Caco-2 (cell line): ENCODE measurements at regions of chrX and their contacts with region 1.

Region 1: DNA sequence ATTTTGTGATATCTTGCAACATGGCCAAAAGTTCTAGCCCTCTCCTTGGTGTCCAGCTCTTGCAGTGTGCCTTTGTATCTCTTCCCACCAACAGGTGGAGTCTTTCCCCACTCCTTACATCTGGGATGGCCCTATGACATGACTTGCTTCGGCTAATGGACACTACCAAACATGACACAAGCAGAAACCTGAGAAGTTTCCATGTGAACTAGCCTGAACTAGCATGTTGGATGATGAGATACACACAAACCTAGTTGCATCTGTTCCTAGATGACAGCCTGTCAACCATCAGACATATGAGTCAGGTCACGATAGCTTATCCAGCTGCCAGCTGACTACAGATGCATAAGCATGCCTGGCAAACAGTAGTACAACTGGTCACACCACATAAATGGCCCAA is 207.5 kb upstream of the FTHL17 start:
- DNase-seq: peak; percentile 20 to 32
- H3K4me3 ChIP-seq: no peak overlapping the region
- H3K4me3 Mint-ChIP-seq: no peak overlapping the region
- H3K27ac Mint-ChIP-seq: no peak overlapping the region
- H3K4me1 ChIP-seq: no peaks in the 10 kb centered on the region
- H3K4me1 Mint-ChIP-seq: peaks cover 8% of the 10 kb centered on the region
- H3K27me3 ChIP-seq: no peaks in the 10 kb centered on the region
- H3K27me3 Mint-ChIP-seq: no peaks in the 10 kb centered on the region
- CTCF ChIP-seq: peak; percentile 24 to 31

Region 2: GRCh38 chrX:30715976-30716375 is 563.4 kb before region 1 on chrX:
- CTCF ChIA-PET with region 1: no interaction called
- POLR2A ChIA-PET with region 1: no interaction called
- intact Hi-C with region 1: no loop called
- DNase-seq: no peak
- H3K4me3 ChIP-seq: no peak overlapping the region
- H3K4me3 Mint-ChIP-seq: no peak overlapping the region
- H3K27ac Mint-ChIP-seq: no peak overlapping the region
- H3K4me1 ChIP-seq: no peaks in the 10 kb centered on the region
- H3K4me1 Mint-ChIP-seq: no peaks in the 10 kb centered on the region
- H3K27me3 ChIP-seq: no peaks in the 10 kb centered on the region
- H3K27me3 Mint-ChIP-seq: no peaks in the 10 kb centered on the region
- CTCF ChIP-seq: no peak

Region 3: GRCh38 chrX:31092970-31093638 is 186.3 kb before region 1 on chrX:
- CTCF ChIA-PET with region 1: no interaction called
- POLR2A ChIA-PET with region 1: no interaction called
- intact Hi-C with region 1: no loop called
- DNase-seq: no peak
- H3K4me3 ChIP-seq: no peak overlapping the region
- H3K4me3 Mint-ChIP-seq: no peak overlapping the region
- H3K27ac Mint-ChIP-seq: no peak overlapping the region
- H3K4me1 ChIP-seq: no peaks in the 10 kb centered on the region
- H3K4me1 Mint-ChIP-seq: no peaks in the 10 kb centered on the region
- H3K27me3 ChIP-seq: no peaks in the 10 kb centered on the region
- H3K27me3 Mint-ChIP-seq: no peaks in the 10 kb centered on the region
- CTCF ChIP-seq: no peak

Region 4: DNA sequence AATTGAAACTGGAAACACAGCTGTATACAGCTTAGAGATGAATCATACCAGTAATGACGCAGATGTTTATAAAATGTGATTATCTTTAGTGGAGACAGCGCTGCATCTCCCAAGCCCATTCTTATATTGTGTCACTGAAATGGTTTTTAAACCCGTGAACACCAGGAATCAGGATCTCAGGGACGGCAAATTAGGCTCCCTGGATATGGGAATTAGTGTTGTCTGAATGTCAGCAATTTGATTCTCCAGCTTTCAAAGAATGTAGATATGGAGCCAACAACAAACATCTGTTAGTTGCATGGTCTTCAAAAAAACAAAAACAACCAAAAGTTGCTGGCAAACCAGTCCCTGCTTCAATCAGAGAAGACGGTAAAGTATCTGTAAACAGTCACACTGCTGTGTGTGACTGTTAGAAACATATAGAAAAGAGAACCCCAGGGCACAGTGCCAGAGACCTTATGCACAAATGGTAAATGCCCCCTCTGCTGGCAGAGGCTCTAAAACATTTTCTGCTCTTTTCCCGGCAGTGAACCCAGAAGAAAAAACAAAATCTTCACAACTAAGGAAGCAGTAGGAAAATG is 144.3 kb after region 1 on chrX:
- CTCF ChIA-PET with region 1: interaction called, 3 read pairs
- POLR2A ChIA-PET with region 1: no interaction called
- intact Hi-C with region 1: loop called (anchors 2 kb)
- DNase-seq: peak; percentile 24 to 29
- H3K4me3 ChIP-seq: no peak overlapping the region
- H3K4me3 Mint-ChIP-seq: no peak overlapping the region
- H3K27ac Mint-ChIP-seq: no peak overlapping the region
- H3K4me1 ChIP-seq: no peaks in the 10 kb centered on the region
- H3K4me1 Mint-ChIP-seq: peaks cover 6% of the 10 kb centered on the region
- H3K27me3 ChIP-seq: no peaks in the 10 kb centered on the region
- H3K27me3 Mint-ChIP-seq: no peaks in the 10 kb centered on the region
- CTCF ChIP-seq: peak; percentile 12 to 37

Region 5: DNA sequence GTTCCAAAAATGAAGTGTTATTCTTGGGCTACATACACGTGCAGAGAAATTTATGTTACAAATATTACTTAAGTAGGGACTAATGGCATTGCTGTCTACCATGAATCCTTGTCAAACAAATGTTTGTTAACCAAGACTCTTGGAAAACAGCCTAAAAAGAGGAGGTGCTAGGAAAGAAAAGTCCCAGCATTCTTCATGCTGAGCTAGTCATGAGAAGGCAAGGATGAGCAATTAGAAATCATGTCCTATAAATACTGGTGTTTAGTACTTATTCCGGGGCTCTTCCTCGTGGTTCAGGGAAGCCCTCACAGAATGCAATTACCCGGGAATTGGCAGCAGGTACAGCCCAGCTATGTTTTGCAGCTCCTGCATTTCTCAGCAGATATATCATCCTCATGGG is 170.6 kb after region 1 on chrX:
- CTCF ChIA-PET with region 1: no interaction called
- POLR2A ChIA-PET with region 1: no interaction called
- intact Hi-C with region 1: no loop called
- DNase-seq: no peak
- H3K4me3 ChIP-seq: no peak overlapping the region
- H3K4me3 Mint-ChIP-seq: no peak overlapping the region
- H3K27ac Mint-ChIP-seq: no peak overlapping the region
- H3K4me1 ChIP-seq: peaks cover 5% of the 10 kb centered on the region; the same call in 1 of the 2 replicates
- H3K4me1 Mint-ChIP-seq: peaks cover 7% of the 10 kb centered on the region
- H3K27me3 ChIP-seq: no peaks in the 10 kb centered on the region
- H3K27me3 Mint-ChIP-seq: no peaks in the 10 kb centered on the region
- CTCF ChIP-seq: no peak

Region 6: GRCh38 chrX:31658360-31658759 is 379.0 kb after region 1 on chrX:
- CTCF ChIA-PET with region 1: no interaction called
- POLR2A ChIA-PET with region 1: no interaction called
- intact Hi-C with region 1: loop called (anchors 1 kb)
- DNase-seq: no peak
- H3K4me3 ChIP-seq: no peak overlapping the region
- H3K4me3 Mint-ChIP-seq: no peak overlapping the region
- H3K27ac Mint-ChIP-seq: no peak overlapping the region
- H3K4me1 ChIP-seq: no peaks in the 10 kb centered on the region
- H3K4me1 Mint-ChIP-seq: no peaks in the 10 kb centered on the region
- H3K27me3 ChIP-seq: no peaks in the 10 kb centered on the region
- H3K27me3 Mint-ChIP-seq: no peaks in the 10 kb centered on the region
- CTCF ChIP-seq: peak; percentile 28 to 40